ENCODE measurements at regions of chr7 and their contacts with region 1.

Region 1: GRCh38 chr7:92590711-92591310 is 621 bp upstream of the FAM133B start:
- DNase-seq: peak in 5 of 42 donors; percentile 5 to 49 (median 13)

Region 2: DNA sequence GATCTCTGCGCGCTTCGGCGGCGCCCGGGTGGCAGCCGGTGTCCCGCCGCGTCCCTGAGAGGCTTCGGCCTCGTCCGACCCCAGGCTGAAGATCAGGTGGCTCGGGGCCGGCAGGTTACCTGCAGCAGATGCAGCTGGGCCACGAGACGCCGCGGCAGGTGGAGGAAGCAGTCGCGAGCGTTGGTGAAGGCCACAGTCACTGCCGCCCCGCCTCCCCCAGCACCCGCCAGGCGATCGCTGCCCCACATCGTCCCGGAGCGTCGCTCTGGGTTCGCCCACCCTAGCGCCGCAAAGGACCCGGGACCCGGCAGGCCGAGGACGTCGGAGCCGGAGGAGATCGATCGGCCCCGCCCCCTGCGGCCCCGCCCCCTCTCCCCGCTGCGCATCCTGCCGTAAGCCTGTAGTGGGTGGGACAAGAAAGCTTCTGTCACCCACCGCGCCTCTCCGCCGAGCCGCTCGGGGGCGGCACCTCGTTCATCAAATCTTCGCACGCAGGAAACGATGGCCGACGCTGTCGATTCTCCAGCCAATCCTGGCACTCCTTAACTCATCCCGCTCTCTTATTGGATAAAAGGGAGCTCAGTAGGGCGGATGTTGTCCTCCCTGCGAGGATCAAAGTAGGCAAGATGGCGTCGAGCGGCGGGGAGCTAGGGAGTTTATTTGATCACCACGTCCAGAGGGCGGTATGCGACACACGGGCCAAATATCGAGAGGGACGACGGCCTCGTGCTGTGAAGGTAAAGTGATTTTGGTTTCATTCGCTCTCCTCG is 62.4 kb before region 1 on chr7 and contains the starts of genes PEX1 and RBM48:
- intact Hi-C with region 1: loop called (anchors 5 kb)
- DNase-seq: peak; percentile 90 to 99 (median 97)